CD14-positive monocyte (primary cell): ENCODE measurements at regions of chr7 and their contacts with region 1.

Region 1: GRCh38 chr7:12623897-12624498 is 53.5 kb downstream of the SCIN start:
- DNase-seq: peak in 2 of 3 donors; percentile 24 to 41
- H3K4me3 ChIP-seq: no peak overlapping the region
- H3K4me3 Mint-ChIP-seq: no peak overlapping the region
- H3K27ac ChIP-seq: no peak overlapping the region
- H3K27ac Mint-ChIP-seq: no peak overlapping the region
- H3K4me1 ChIP-seq: no peaks in the 10 kb centered on the region
- H3K4me1 Mint-ChIP-seq: no peaks in the 10 kb centered on the region
- H3K27me3 ChIP-seq: no peaks in the 10 kb centered on the region
- H3K27me3 Mint-ChIP-seq: peaks cover 0 to 5% (median 2%) of the 10 kb centered on the region in 3 donors
- CTCF ChIP-seq: peak; percentile 96

Region 2: GRCh38 chr7:12524794-12525386 is 99.1 kb before region 1 on chr7:
- intact Hi-C with region 1: loop called (anchors 5 to 10 kb)
- DNase-seq: peak; percentile 15 to 56 (median 32)
- H3K4me3 ChIP-seq: no peak overlapping the region
- H3K4me3 Mint-ChIP-seq: no peak overlapping the region
- H3K27ac ChIP-seq: no peak overlapping the region
- H3K27ac Mint-ChIP-seq: no peak overlapping the region
- H3K4me1 ChIP-seq: no peaks in the 10 kb centered on the region
- H3K4me1 Mint-ChIP-seq: peaks cover 3% of the 10 kb centered on the region
- H3K27me3 ChIP-seq: no peaks in the 10 kb centered on the region
- H3K27me3 Mint-ChIP-seq: peaks cover 0 to 4% (median 1%) of the 10 kb centered on the region in 3 donors
- CTCF ChIP-seq: peak; percentile 84

Region 3: DNA sequence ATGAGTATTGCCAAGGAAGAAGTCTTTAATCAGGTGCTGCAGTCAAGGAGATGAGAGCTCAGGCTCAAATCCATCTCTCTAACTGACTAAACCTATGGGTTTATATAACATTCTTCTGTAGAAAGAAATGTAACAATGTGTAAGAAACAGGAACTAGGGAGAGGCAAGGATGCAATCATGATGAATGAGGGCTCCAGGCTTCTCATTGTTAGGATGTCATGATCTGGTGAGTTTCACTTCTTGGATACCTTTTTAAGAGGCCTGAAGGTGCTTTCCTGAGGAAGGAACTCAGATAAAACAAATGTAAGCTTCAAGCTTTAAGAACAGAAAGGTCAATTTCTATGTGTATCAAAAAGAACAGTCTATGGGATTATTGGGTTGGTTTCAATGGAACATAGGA is 84.3 kb before region 1 on chr7:
- intact Hi-C with region 1: loop called in 1 of 2 experiments (anchors 10 kb)
- DNase-seq: peak; percentile 7 to 58 (median 19)
- H3K4me3 ChIP-seq: no peak overlapping the region
- H3K4me3 Mint-ChIP-seq: no peak overlapping the region
- H3K27ac ChIP-seq: no peak overlapping the region
- H3K27ac Mint-ChIP-seq: no peak overlapping the region
- H3K4me1 ChIP-seq: no peaks in the 10 kb centered on the region
- H3K4me1 Mint-ChIP-seq: no peaks in the 10 kb centered on the region
- H3K27me3 ChIP-seq: no peaks in the 10 kb centered on the region
- H3K27me3 Mint-ChIP-seq: no peaks in the 10 kb centered on the region
- CTCF ChIP-seq: no peak

Region 4: DNA sequence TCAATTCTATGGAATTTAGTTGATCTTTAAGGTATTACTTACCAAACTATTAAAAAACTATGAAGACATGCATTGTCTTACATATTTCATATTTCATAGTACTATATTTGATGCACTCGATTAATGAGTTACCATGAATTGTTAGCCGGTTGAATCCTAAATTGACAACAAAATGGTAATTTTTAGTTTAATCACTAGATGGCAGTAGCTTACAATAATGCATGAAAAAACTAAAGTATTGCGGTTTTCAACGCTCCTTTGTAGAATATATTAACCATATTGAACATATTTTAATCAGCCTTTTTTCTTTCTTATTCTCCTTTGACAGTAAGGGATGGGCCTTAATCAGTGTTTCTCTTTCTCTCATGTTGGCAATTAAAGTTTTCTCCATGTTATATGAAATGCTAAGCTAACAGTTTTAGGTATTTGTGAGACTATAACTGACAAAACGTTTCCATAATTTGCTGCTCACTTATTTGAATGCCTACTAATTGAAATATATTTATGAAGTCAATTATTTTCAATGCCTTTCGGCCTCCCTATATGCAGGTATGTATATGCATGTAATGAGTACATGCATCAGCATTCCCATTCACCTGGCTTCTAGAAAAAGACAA is 15.0 kb after region 1 on chr7:
- intact Hi-C with region 1: no loop called
- DNase-seq: peak; percentile 35 to 72 (median 35)
- H3K4me3 ChIP-seq: peak overlapping the region in 1 of 3 experiments; percentile 51
- H3K4me3 Mint-ChIP-seq: no peak overlapping the region
- H3K27ac ChIP-seq: peak overlapping the region in 1 of 2 donors; percentile 58
- H3K27ac Mint-ChIP-seq: peak overlapping the region in 1 of 7 donors; percentile 80
- H3K4me1 ChIP-seq: peaks cover 13 to 33% of the 10 kb centered on the region in 2 donors
- H3K4me1 Mint-ChIP-seq: peaks cover 22% of the 10 kb centered on the region
- H3K27me3 ChIP-seq: no peaks in the 10 kb centered on the region
- H3K27me3 Mint-ChIP-seq: no peaks in the 10 kb centered on the region
- CTCF ChIP-seq: peak; percentile 84

Region 5: DNA sequence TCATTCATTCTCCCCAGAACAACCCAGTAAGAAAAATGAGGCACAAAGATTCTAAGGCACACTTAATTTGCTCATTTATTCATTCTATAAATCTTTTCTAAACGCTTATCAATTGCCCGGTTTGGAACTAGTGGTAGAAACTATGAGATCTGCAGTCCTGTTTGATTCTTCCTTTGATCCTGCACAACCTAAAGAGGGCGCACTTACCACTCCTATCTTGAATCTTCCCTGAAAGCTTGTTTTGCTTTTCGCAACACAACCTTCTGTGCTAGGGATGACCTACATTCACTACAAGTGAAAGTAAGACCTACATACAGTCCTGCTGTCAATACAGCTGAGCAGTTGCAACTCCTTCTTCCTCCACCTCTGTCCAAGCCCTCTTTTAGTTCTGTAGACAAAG is 50.9 kb after region 1 on chr7:
- intact Hi-C with region 1: no loop called
- DNase-seq: peak; percentile 64 to 70 (median 67)
- H3K4me3 ChIP-seq: no peak overlapping the region
- H3K4me3 Mint-ChIP-seq: no peak overlapping the region
- H3K27ac ChIP-seq: peak overlapping the region in 1 of 2 donors; percentile 59
- H3K27ac Mint-ChIP-seq: peak overlapping the region in 5 of 7 donors; percentile 28 to 65 (median 60)
- H3K4me1 ChIP-seq: peaks cover 31 to 55% of the 10 kb centered on the region in 2 donors
- H3K4me1 Mint-ChIP-seq: peaks cover 43% of the 10 kb centered on the region
- H3K27me3 ChIP-seq: no peaks in the 10 kb centered on the region
- H3K27me3 Mint-ChIP-seq: no peaks in the 10 kb centered on the region
- CTCF ChIP-seq: peak; percentile 66